PC-9 (cell line): ENCODE measurements at regions of chr2 and their contacts with region 1.

Region 1: DNA sequence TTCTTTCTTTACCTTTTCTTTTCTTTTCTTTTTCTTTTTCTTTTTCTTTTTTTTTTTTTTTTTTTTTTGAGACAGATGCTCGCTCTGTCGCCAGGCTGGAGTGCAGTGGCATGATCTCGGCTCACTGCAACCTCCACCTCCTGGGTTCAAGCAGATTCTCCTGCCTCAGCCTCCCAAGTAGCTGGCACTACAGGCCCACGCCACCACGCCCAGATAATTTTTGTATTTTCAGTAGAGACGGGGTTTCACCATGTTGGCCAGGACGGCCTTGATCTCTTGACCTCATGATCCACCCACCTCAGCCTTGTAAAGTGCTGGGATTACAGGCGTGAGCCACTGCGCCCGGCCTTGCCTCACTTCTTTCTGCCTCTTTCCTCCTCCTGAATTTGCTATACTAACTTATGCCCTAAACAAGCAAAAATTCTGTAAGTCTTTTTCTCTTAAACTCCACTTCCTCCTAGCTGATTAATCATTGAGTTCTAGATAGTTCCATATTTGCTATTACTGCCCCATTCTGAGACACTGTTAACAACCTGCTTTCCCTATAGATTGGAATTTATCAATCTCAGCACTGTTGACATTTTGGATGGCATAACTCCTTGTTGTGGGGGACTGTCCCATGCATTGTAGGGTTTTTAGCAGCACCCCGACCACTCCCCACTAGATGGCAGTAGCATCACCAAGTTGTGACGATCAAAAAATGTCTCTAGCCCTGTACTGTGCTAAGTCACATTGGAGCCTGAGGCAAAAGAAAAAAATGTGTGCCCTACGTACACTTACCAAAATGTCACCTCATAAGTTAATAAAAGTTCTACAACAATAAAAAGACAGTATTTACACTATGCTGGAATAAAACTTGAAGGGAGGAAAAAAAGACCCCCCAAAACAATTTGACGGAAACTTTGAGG is 16.4 kb upstream of the THADA start:
- DNase-seq: peak; percentile 77 to 79
- H3K4me3 ChIP-seq: no peak overlapping the region
- H3K27ac ChIP-seq: no peak overlapping the region
- H3K4me1 ChIP-seq: 0 out of 2 replicates have a peak, but pooled peaks cover 3% of the 10 kb centered on the region
- H3K27me3 ChIP-seq: no peaks in the 10 kb centered on the region
- CTCF ChIP-seq: peak; percentile 96

Region 2: GRCh38 chr2:43276962-43277391 is 335.3 kb before region 1 on chr2:
- CTCF ChIA-PET with region 1: no interaction called
- POLR2A ChIA-PET with region 1: no interaction called
- intact Hi-C with region 1: no loop called
- DNase-seq: peak; percentile 62 to 65
- H3K4me3 ChIP-seq: no peak overlapping the region
- H3K27ac ChIP-seq: peak overlapping the region; percentile 42
- H3K4me1 ChIP-seq: peaks cover 18% of the 10 kb centered on the region
- H3K27me3 ChIP-seq: no peaks in the 10 kb centered on the region
- CTCF ChIP-seq: no peak

Region 3: DNA sequence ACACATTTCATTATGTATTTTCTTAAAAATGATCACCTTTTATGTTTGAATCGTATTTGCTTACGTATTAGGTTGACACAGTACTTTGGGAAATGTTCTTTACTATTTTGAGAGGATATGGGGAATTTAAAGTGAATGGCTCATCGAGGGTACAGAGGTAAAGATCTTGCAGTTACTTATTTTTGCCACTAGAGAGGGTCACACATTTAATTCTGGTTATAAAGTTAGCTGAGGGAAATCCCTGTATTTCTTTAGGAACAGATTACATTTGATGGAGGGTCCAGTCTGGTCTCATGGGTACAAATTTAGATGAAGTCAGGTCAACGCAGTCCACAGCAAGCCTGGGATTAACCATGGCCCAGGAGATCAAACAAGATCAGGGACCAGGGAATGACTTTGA is 186.1 kb after region 1 on chr2:
- CTCF ChIA-PET with region 1: no interaction called
- POLR2A ChIA-PET with region 1: no interaction called
- intact Hi-C with region 1: loop called (anchors 10 kb)
- DNase-seq: no peak
- H3K4me3 ChIP-seq: no peak overlapping the region
- H3K27ac ChIP-seq: no peak overlapping the region
- H3K4me1 ChIP-seq: no peaks in the 10 kb centered on the region
- H3K27me3 ChIP-seq: no peaks in the 10 kb centered on the region
- CTCF ChIP-seq: peak; percentile 47; the same call in 1 of the 2 replicates

Region 4: DNA sequence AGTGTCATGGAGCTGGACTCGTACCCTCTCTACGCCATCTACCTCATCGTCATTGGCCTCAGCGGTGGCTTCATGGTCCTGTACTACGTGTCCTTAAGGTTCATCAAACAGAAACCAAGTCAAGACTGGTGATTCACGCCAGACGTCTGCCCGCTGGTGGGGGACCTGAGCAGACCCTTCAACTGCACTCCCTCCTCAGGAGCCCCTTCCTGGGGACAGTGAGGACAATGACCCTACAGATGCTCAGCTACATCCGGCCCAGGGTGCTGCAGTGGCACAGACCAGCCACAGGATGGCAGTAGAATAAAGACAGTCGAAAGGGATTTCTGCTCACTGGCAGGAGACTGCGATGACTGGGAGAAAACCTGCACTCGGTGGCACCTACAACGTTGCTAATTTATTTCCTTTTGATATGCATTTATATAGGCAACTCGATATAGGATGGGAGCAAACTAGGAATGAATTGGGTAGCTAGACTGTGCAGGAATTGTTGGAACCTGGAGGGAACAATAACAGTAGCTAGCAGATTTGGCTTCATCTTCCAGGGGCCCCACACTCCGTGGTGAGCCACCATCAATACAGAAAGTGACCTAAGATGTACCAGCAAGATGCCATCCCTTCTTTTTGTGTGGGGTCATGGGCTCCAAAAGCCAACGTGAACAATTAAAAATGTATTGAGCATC is 265.7 kb after region 1 on chr2:
- CTCF ChIA-PET with region 1: no interaction called
- POLR2A ChIA-PET with region 1: no interaction called
- intact Hi-C with region 1: loop called (anchors 1 kb)
- DNase-seq: peak; percentile 64 to 71
- H3K4me3 ChIP-seq: no peak overlapping the region
- H3K27ac ChIP-seq: no peak overlapping the region
- H3K4me1 ChIP-seq: peaks cover 16% of the 10 kb centered on the region
- H3K27me3 ChIP-seq: peaks cover 42% of the 10 kb centered on the region
- CTCF ChIP-seq: peak; percentile 99

Region 5: DNA sequence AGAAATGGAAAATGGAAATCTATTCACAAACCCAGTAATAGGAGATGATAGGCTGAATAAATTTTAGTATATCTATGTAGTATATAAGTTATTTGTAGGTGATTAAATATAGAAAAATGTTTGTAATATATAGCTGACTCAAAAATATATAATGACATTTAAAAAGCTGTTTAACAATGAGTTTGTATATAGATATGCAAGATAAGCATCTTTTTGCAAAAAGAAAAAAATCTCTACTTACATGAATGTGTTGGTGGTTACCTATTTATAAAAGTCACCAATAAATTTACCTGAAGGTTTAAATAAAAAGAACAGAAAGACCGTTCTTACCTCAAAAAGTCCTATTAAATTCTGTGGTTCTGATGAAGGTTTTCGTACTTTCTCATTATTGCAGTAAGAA is 312.2 kb after region 1 on chr2:
- CTCF ChIA-PET with region 1: no interaction called
- POLR2A ChIA-PET with region 1: no interaction called
- intact Hi-C with region 1: no loop called
- DNase-seq: no peak
- H3K4me3 ChIP-seq: no peak overlapping the region
- H3K27ac ChIP-seq: no peak overlapping the region
- H3K4me1 ChIP-seq: no peaks in the 10 kb centered on the region
- H3K27me3 ChIP-seq: no peaks in the 10 kb centered on the region
- CTCF ChIP-seq: no peak

Region 6: DNA sequence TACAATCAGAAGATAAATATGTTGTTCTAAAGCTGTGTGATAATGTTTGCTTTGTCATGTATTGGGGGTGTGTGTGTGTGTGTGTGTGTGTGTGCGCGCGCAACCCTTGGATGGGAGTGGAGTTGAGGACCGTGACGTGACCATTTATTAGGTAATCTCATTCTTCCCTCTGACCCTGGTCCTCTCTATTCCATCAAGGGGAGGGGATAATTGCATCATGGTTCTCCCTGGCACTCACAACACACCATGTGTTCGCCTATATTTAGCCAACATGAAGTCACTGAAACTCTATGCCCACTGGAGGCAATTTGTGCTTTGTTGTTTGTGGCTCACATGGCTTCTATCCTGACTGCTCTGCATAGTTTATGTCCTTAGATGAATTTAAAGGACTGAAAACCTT is 463.3 kb after region 1 on chr2:
- CTCF ChIA-PET with region 1: no interaction called
- POLR2A ChIA-PET with region 1: no interaction called
- intact Hi-C with region 1: no loop called
- DNase-seq: no peak
- H3K4me3 ChIP-seq: no peak overlapping the region
- H3K27ac ChIP-seq: no peak overlapping the region
- H3K4me1 ChIP-seq: no peaks in the 10 kb centered on the region
- H3K27me3 ChIP-seq: no peaks in the 10 kb centered on the region
- CTCF ChIP-seq: no peak